Mammary epithelial cell (primary cell): ENCODE measurements at regions of chr9 and their contacts with region 1.

Region 1: GRCh38 chr9:114285166-114285867 is 37.6 kb upstream of the ORM1 start:
- DNase-seq: no peak
- H3K4me3 ChIP-seq: no peak overlapping the region
- H3K27ac ChIP-seq: no peak overlapping the region
- H3K4me1 ChIP-seq: peaks cover 37% of the 10 kb centered on the region
- H3K27me3 ChIP-seq: no peaks in the 10 kb centered on the region
- CTCF ChIP-seq: no peak

Region 2: DNA sequence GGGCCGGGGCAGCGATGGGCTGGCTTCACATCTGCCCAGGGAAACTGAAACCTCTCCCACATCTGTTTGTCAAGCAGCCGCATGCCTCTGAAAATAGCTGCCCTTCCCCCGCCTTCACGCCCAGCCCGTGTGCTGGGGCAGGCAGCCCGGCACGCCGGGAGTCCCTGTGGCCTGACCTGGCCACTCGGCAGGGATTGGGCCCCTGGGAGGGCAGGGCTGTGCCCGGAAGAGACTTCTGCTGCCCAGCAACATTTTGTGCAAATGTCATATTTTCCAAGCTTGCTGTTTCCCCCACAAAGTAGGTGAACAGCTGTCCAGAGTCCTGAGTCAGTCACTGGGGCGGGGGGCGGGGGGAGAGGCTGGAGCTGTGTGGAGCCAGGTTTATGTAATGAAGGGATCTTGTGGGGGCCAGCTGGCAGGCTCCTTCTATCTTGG is 121.8 kb before region 1 on chr9:
- CTCF ChIA-PET with region 1: no interaction called
- dilution Hi-C with region 1: no loop called
- in situ Hi-C with region 1: loop called (anchors 5 kb)
- intact Hi-C with region 1: no loop called
- DNase-seq: no peak
- H3K4me3 ChIP-seq: no peak overlapping the region
- H3K27ac ChIP-seq: no peak overlapping the region
- H3K4me1 ChIP-seq: peaks cover 11% of the 10 kb centered on the region
- H3K27me3 ChIP-seq: no peaks in the 10 kb centered on the region
- CTCF ChIP-seq: no peak

Region 3: DNA sequence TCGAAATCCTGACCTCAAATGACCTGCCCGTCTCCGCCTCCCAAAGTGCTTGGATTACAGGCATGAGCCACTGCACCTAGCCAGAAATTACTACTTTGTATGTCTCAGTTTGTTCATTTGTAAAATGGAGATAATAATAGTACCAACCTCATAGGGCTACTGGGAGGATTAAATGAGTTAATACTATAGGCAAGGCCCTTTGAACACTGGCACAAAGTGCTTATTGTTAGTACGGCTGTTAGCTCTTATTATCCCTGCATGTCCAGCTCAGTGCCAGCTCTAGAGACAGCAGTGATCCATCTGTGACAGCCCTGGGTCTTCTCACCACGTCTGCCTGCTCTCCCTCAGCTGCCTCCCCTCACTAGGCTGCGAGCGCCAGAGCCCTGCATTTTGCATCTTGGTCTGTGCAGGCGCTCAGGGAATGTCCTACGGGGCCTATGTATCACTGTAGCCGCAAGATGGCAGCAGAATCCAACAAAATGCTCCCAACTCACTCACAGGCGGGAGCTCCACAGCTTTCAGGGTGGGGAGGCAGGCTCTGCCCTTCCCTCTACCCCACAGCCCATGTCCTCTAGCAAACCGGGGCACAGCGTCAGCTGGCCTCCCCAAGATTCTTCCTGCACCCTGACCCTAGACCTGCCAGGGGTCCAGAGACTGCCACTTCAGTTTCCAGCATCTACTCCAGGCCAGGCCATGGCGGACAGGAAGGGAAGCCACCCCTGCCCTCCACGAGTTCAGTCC is 120.1 kb after region 1 on chr9:
- CTCF ChIA-PET with region 1: no interaction called
- dilution Hi-C with region 1: no loop called
- in situ Hi-C with region 1: no loop called
- intact Hi-C with region 1: no loop called
- DNase-seq: peak; percentile 71
- H3K4me3 ChIP-seq: no peak overlapping the region
- H3K27ac ChIP-seq: no peak overlapping the region
- H3K4me1 ChIP-seq: peaks cover 27% of the 10 kb centered on the region
- H3K27me3 ChIP-seq: no peaks in the 10 kb centered on the region
- CTCF ChIP-seq: peak; percentile 86 to 87

Region 4: DNA sequence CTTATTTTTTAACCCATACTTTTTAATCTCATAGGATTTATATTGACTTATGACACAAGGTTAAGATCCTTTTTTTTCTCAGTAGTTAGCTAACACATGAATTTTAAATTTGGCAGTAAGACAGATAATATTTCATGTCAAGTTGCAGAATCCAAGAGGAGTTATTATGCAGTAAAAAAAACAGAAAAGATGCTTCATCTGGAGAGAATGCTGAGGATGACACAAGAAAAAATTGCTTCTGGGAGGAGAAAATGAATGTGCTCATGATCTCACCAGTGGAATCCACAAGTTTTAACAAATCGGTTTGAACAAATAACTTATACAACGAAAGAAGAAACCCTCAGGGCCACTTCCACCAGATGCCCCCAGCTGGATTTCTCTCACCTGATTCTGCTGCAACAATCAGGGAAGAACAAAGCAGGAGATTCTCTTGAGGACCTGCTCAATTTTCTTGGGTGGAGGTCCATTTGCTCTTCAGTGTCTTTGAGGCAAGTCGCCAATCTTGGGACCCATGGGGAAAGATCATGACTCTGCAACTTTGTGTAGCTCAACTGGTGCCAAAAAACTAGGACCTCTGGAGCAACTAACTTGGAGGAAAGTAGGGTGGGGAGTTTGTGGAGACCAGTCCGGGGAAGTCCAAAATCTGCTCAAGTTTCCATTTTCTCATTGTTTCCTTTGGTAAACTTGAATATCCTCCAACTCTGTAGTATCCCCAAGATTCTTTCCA is 571.1 kb after region 1 on chr9:
- CTCF ChIA-PET with region 1: no interaction called
- dilution Hi-C with region 1: no loop called
- in situ Hi-C with region 1: no loop called
- intact Hi-C with region 1: no loop called
- DNase-seq: peak; percentile 65
- H3K4me3 ChIP-seq: no peak overlapping the region
- H3K27ac ChIP-seq: no peak overlapping the region
- H3K4me1 ChIP-seq: peaks cover 6% of the 10 kb centered on the region
- H3K27me3 ChIP-seq: no peaks in the 10 kb centered on the region
- CTCF ChIP-seq: no peak